ENCODE measurements at regions of chr11 and their contacts with region 1.

Region 1: DNA sequence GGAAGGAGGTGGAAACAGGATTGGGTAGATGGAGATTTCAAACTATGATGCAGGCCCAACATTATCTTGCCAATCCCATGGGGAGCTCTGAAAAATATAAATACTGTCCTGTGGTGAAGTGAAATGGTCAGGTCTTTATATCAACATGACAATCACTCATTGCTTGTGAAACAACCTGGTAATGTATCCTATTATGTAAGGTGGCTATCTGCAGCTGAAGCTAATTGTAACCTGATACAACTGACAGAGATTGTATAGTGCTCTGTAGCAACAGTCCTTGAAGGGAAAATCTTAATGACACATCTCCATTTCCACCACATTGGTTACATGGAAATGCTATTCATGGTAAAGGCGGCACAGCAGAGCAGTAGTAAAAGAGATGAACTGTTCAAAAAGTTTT is 20.7 kb upstream of the CHORDC1 start:
- DNase-seq: no peak
- H3K4me3 ChIP-seq: no peak overlapping the region
- H3K27ac ChIP-seq: no peak overlapping the region
- H3K4me1 ChIP-seq: no peaks in the 10 kb centered on the region
- H3K27me3 ChIP-seq: no peaks in the 10 kb centered on the region
- CTCF ChIP-seq: no peak
- POLR2A ChIP-seq: no peak

Region 2: DNA sequence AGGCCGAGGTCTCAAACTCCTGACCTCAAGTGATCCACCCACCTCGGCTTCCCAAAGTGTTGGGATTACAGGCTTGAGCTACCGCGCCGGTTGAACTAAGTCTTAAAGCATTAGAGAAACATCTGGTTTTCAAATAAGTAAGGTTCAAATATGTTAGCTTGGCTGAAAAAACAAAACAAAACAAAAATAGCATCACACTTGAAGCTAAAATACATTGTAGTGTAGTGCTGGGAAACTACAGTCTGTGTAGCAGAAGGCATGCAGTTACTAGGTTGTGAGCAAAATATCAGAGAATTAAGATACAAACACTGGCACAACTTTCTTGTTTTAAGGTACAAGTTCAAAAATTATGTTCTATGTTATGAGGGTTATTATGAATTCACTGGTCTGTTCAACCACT is 204.1 kb after region 1 on chr11:
- intact Hi-C with region 1: loop called (anchors 10 kb)
- DNase-seq: peak; percentile 27
- H3K4me3 ChIP-seq: no peak overlapping the region
- H3K27ac ChIP-seq: no peak overlapping the region
- H3K4me1 ChIP-seq: no peaks in the 10 kb centered on the region
- H3K27me3 ChIP-seq: no peaks in the 10 kb centered on the region
- CTCF ChIP-seq: no peak
- POLR2A ChIP-seq: no peak

Measured in spleen (tissue), 13 donors.